ENCODE measurements at regions of chr16 and their contacts with region 1.

Region 1: GRCh38 chr16:79601931-79602627 is 1.5 kb upstream of the MAF start:
- DNase-seq: peak; percentile 51 to 78 (median 72)
- ATAC-seq: peak; percentile 20
- H3K4me3 ChIP-seq: peak overlapping the region; percentile 84
- H3K4me3 Mint-ChIP-seq: peak overlapping the region; percentile 90 to 98 (median 94)
- H3K27ac ChIP-seq: no peak overlapping the region
- H3K27ac Mint-ChIP-seq: peak overlapping the region in 7 of 9 donors; percentile 3 to 98 (median 66)
- H3K4me1 ChIP-seq: peaks cover 4 to 7% of the 10 kb centered on the region in 2 donors
- H3K4me1 Mint-ChIP-seq: peaks cover 6 to 47% (median 33%) of the 10 kb centered on the region in 7 donors
- H3K27me3 ChIP-seq: no peaks in the 10 kb centered on the region
- H3K27me3 Mint-ChIP-seq: peaks cover 15 to 24% (median 20%) of the 10 kb centered on the region in 5 donors

Region 2: DNA sequence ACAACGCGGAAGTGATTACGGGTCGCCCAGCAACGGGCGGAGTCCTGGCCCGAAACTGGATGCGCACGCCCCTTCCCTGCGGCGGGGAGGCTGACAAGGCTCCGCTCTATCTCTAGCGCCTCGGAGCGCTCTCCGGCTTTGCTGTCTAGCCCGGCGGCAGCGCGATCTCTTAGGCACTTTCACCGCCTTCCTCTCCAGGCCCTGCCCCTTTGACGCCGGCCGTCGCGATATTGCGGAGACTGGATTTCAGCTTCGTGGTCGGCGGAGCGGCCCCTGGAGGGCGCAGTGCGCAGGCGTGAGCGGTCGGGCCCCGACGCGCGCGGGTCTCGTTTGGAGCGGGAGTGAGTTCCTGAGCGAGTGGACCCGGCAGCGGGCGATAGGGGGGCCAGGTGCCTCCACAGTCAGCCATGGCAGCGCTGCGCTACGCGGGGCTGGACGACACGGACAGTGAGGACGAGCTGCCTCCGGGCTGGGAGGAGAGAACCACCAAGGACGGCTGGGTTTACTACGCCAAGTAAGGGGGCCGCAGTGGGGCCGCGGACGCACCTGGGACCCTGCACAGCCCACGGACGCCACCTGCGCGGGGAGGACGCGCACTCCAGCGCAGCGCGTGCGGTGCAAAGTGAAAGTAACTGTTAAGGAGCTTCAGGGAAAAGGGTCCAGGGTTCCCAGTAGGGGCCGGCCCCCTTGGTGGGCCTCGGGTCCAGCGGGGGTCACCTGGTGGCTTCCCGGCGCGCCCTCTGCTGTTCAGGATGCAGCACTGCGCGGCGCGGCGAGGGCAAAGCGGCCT is 1502.5 kb before region 1 on chr16 and contains the start of gene WWOX:
- CTCF ChIA-PET with region 1: no interaction called
- POLR2A ChIA-PET with region 1: no interaction called
- intact Hi-C with region 1: loop called (anchors 1 kb)
- DNase-seq: peak; percentile 92 to 98 (median 96)
- ATAC-seq: peak; percentile 97
- H3K4me3 ChIP-seq: peak within 1 kb of the TSS; percentile 99
- H3K4me3 Mint-ChIP-seq: peak within 1 kb of the TSS; percentile 80 to 94 (median 90)
- H3K27ac ChIP-seq: peak within 1 kb of the TSS; percentile 81
- H3K27ac Mint-ChIP-seq: peak within 1 kb of the TSS; percentile 81 to 96 (median 94)
- H3K4me1 ChIP-seq: peaks cover 8 to 11% of the 10 kb centered on the region in 2 donors
- H3K4me1 Mint-ChIP-seq: peaks cover 14 to 46% (median 28%) of the 10 kb centered on the region in 7 donors
- H3K27me3 ChIP-seq: no peaks in the 10 kb centered on the region
- H3K27me3 Mint-ChIP-seq: peaks cover 0 to 8% (median 2%) of the 10 kb centered on the region in 5 donors
- total RNA-seq, gene WWOX: 19.2 to 31.1 (median 26.1) TPM

Region 3: DNA sequence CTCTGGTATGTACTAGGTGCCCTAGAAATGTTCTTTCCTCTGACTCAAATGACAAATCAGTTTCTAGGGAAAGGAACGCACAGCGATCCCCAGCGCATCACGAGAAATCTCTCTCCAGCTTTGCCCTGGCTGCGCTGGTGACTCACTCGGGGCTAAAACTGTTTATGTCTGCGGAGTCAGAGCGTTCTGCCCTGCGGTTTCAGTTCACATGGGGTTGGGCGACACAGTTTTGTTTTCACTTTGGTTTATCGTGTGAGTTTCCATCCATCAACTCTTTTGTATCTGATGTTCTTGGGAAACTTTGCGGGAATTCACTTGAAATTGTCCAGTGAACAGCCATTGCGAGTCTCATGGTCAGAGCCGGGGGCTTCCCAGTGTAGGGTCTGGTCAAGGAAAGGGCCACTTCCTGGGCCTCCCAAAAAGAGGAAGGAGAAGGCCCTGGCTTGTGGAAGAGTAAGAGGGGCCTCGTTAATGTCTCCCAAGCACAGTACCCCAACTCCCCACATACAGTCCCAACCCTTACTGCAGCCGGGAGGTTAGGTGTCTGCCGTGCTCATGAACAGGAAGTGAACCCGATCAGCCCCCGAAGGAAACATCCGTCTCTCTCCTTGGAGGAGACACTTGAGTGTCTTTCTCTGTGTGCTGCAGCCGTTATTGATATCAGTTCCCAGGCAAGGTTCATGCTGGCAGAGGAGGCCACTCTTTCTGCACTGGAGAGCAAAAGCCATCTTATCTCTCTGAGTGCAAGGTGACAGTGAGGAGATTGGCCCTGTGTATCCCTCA is 859.4 kb before region 1 on chr16:
- CTCF ChIA-PET with region 1: no interaction called
- POLR2A ChIA-PET with region 1: no interaction called
- intact Hi-C with region 1: loop called in 1 of 2 experiments (anchors 1 kb)
- DNase-seq: peak; percentile 27 to 72 (median 46)
- ATAC-seq: peak; percentile 93
- H3K4me3 ChIP-seq: peak overlapping the region; percentile 62
- H3K4me3 Mint-ChIP-seq: peak overlapping the region; percentile 61 to 84 (median 77)
- H3K27ac ChIP-seq: peak overlapping the region; percentile 73
- H3K27ac Mint-ChIP-seq: peak overlapping the region; percentile 86 to 98 (median 93)
- H3K4me1 ChIP-seq: peaks cover 12 to 22% of the 10 kb centered on the region in 2 donors
- H3K4me1 Mint-ChIP-seq: peaks cover 5 to 23% (median 20%) of the 10 kb centered on the region in 7 donors
- H3K27me3 ChIP-seq: no peaks in the 10 kb centered on the region
- H3K27me3 Mint-ChIP-seq: no peaks in the 10 kb centered on the region

Region 4: GRCh38 chr16:79089735-79090284 is 512.3 kb before region 1 on chr16:
- CTCF ChIA-PET with region 1: no interaction called
- POLR2A ChIA-PET with region 1: no interaction called
- intact Hi-C with region 1: loop called in 1 of 2 experiments (anchors 2 kb)
- DNase-seq: peak in 8 of 9 donors; percentile 14 to 67 (median 36)
- ATAC-seq: peak; percentile 52
- H3K4me3 ChIP-seq: peak overlapping the region; percentile 7
- H3K4me3 Mint-ChIP-seq: peak overlapping the region; percentile 76 to 85 (median 82)
- H3K27ac ChIP-seq: no peak overlapping the region
- H3K27ac Mint-ChIP-seq: peak overlapping the region; percentile 48 to 85 (median 80)
- H3K4me1 ChIP-seq: peaks cover 40 to 46% of the 10 kb centered on the region in 2 donors
- H3K4me1 Mint-ChIP-seq: peaks cover 35 to 69% (median 57%) of the 10 kb centered on the region in 7 donors
- H3K27me3 ChIP-seq: no peaks in the 10 kb centered on the region
- H3K27me3 Mint-ChIP-seq: peaks cover 0 to 6% (median 0%) of the 10 kb centered on the region in 5 donors

Region 5: GRCh38 chr16:79587897-79588296 is 14.2 kb before region 1 on chr16:
- CTCF ChIA-PET with region 1: interaction called, 4 read pairs
- POLR2A ChIA-PET with region 1: interaction called, 4 read pairs
- intact Hi-C with region 1: loop called in 1 of 2 experiments (anchors 1 kb)
- DNase-seq: no peak
- ATAC-seq: no peak
- H3K4me3 ChIP-seq: no peak overlapping the region
- H3K4me3 Mint-ChIP-seq: no peak overlapping the region
- H3K27ac ChIP-seq: no peak overlapping the region
- H3K27ac Mint-ChIP-seq: no peak overlapping the region
- H3K4me1 ChIP-seq: peaks cover 0 to 6% of the 10 kb centered on the region in 2 donors
- H3K4me1 Mint-ChIP-seq: peaks cover 0 to 11% (median 4%) of the 10 kb centered on the region in 7 donors
- H3K27me3 ChIP-seq: no peaks in the 10 kb centered on the region
- H3K27me3 Mint-ChIP-seq: peaks cover 29 to 60% (median 30%) of the 10 kb centered on the region in 5 donors

Region 6: GRCh38 chr16:79770244-79771064 is 168.4 kb after region 1 on chr16:
- CTCF ChIA-PET with region 1: no interaction called
- POLR2A ChIA-PET with region 1: no interaction called
- intact Hi-C with region 1: loop called (anchors 1 to 2 kb)
- DNase-seq: peak; percentile 10 to 73 (median 38)
- ATAC-seq: peak; percentile 91
- H3K4me3 ChIP-seq: peak overlapping the region; percentile 60
- H3K4me3 Mint-ChIP-seq: peak overlapping the region; percentile 71 to 98 (median 89)
- H3K27ac ChIP-seq: peak overlapping the region; percentile 26
- H3K27ac Mint-ChIP-seq: peak overlapping the region; percentile 4 to 94 (median 55)
- H3K4me1 ChIP-seq: no peaks in the 10 kb centered on the region
- H3K4me1 Mint-ChIP-seq: peaks cover 5 to 34% (median 28%) of the 10 kb centered on the region in 7 donors
- H3K27me3 ChIP-seq: no peaks in the 10 kb centered on the region
- H3K27me3 Mint-ChIP-seq: peaks cover 7 to 32% (median 8%) of the 10 kb centered on the region in 5 donors